B cell (primary cell): ENCODE measurements at regions of chr17 and their contacts with region 1.

Region 1: GRCh38 chr17:50169121-50169764 is 3.4 kb downstream of the SGCA start:
- DNase-seq: peak; percentile 91
- ATAC-seq: peak; percentile 84
- H3K4me3 ChIP-seq: peak overlapping the region in 4 of 5 experiments; percentile 12 to 44 (median 29)
- H3K4me3 Mint-ChIP-seq: peak overlapping the region; percentile 64
- H3K27ac ChIP-seq: no peak overlapping the region
- H3K27ac Mint-ChIP-seq: peak overlapping the region; percentile 74
- H3K4me1 ChIP-seq: peaks cover 16 to 27% of the 10 kb centered on the region in 2 donors
- H3K4me1 Mint-ChIP-seq: peaks cover 13% of the 10 kb centered on the region
- H3K27me3 ChIP-seq: no peaks in the 10 kb centered on the region
- H3K27me3 Mint-ChIP-seq: no peaks in the 10 kb centered on the region
- CTCF ChIP-seq: peak; percentile 66

Region 2: DNA sequence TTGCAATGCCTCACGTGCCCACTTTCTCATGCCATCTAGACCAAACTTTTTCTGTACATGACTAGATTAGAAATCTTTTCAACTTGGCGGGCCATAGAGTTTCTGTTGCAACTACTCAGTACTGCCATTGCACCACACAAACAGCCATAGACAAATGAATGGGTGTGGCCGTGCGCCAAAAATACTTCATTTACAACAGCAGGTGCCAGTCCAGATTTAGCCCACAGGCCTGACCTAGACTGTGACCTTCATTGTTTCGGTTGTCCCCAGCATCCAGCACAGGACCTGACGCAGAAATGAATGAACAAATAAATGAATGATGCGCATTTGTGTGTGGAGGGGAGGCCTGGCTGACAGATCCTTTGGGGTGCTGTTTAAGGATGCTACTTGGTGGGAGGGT is 88.4 kb before region 1 on chr17:
- CTCF ChIA-PET with region 1: no interaction called
- POLR2A ChIA-PET with region 1: no interaction called
- intact Hi-C with region 1: no loop called
- DNase-seq: no peak
- ATAC-seq: peak; percentile 45
- H3K4me3 ChIP-seq: no peak overlapping the region
- H3K4me3 Mint-ChIP-seq: peak overlapping the region; percentile 45
- H3K27ac ChIP-seq: peak overlapping the region in 1 of 2 donors; percentile 44
- H3K27ac Mint-ChIP-seq: peak overlapping the region; percentile 80
- H3K4me1 ChIP-seq: peaks cover 7 to 22% of the 10 kb centered on the region in 2 donors
- H3K4me1 Mint-ChIP-seq: peaks cover 21% of the 10 kb centered on the region
- H3K27me3 ChIP-seq: no peaks in the 10 kb centered on the region
- H3K27me3 Mint-ChIP-seq: no peaks in the 10 kb centered on the region
- CTCF ChIP-seq: no peak

Region 3: DNA sequence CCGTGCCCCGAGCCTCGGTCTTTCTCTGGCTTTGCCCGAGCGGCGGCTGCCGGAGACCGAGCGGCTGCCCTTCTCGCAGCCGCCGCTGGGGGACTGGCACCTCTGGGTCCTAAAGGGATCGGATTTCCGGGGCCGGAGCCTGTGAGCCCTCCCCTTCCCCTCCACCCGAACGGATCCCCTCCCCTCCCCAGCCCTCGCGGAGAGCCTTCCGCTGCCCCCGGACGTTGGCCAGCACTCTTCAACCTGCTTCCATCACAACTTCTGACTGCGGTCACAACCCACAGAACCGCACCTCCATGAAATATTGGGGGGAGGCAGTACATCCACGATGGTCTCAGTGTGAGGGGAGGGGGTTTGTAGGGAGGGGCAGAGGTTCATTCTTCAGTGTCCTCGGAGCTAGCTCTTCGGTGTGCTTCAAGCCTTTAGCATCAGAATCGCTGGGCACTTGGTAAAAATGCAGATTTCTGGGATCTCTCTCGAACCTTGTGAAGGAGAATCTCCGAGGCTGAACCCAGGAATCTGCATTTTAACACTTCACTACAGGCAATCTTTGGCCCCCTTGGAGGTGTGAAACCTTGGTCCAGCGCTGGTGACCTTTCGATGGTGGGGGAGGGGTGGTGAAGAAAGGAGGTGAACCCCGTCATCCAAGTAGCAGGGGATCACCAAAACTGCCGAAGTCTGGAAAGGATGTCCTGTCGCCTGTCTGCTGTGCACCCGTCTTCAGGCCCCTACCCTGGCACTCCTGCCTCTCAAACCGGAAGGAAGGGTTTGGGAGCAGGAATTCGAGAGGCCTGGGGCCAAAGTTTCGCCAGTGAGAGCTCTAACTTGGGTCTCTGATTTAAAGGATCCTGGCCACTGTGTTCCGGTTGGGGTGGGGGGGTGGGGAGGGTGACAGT is 18.0 kb before region 1 on chr17:
- CTCF ChIA-PET with region 1: interaction called, 18 read pairs
- POLR2A ChIA-PET with region 1: interaction called, 14 read pairs
- intact Hi-C with region 1: no loop called
- DNase-seq: peak; percentile 90
- ATAC-seq: peak; percentile 48
- H3K4me3 ChIP-seq: peak overlapping the region; percentile 70 to 97 (median 85)
- H3K4me3 Mint-ChIP-seq: peak overlapping the region; percentile 95
- H3K27ac ChIP-seq: peak overlapping the region; percentile 48 to 75
- H3K27ac Mint-ChIP-seq: peak overlapping the region; percentile 94
- H3K4me1 ChIP-seq: peaks cover 17 to 46% of the 10 kb centered on the region in 2 donors
- H3K4me1 Mint-ChIP-seq: peaks cover 37% of the 10 kb centered on the region
- H3K27me3 ChIP-seq: no peaks in the 10 kb centered on the region
- H3K27me3 Mint-ChIP-seq: no peaks in the 10 kb centered on the region
- CTCF ChIP-seq: peak; percentile 60

Region 4: DNA sequence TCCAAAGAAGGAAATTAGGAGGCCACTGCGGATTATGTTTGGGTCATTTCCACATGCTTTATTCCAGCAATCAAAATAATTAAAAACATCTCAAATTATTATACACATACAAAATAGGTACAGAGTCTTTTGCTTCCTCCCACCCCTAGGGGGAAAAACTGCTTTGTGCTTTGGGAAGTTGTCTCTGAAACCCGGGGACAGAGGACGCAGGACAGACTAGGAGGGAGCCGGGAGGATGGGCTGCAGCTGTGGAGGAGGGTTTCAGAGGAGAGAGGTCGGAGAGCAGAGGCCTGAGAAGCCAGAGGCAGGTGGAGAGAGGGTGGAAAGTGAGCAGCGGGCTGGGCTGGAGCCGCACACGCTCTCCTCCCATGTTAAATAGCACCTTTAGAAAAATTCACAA is 14.8 kb after region 1 on chr17:
- CTCF ChIA-PET with region 1: interaction called, 27 read pairs
- POLR2A ChIA-PET with region 1: no interaction called
- intact Hi-C with region 1: no loop called
- DNase-seq: no peak
- ATAC-seq: no peak
- H3K4me3 ChIP-seq: peak overlapping the region in 2 of 5 experiments; percentile 0 to 16
- H3K4me3 Mint-ChIP-seq: peak overlapping the region; percentile 56
- H3K27ac ChIP-seq: no peak overlapping the region
- H3K27ac Mint-ChIP-seq: peak overlapping the region; percentile 53
- H3K4me1 ChIP-seq: peaks cover 27 to 31% of the 10 kb centered on the region in 2 donors
- H3K4me1 Mint-ChIP-seq: peaks cover 40% of the 10 kb centered on the region
- H3K27me3 ChIP-seq: no peaks in the 10 kb centered on the region
- H3K27me3 Mint-ChIP-seq: no peaks in the 10 kb centered on the region
- CTCF ChIP-seq: peak; percentile 33

Region 5: DNA sequence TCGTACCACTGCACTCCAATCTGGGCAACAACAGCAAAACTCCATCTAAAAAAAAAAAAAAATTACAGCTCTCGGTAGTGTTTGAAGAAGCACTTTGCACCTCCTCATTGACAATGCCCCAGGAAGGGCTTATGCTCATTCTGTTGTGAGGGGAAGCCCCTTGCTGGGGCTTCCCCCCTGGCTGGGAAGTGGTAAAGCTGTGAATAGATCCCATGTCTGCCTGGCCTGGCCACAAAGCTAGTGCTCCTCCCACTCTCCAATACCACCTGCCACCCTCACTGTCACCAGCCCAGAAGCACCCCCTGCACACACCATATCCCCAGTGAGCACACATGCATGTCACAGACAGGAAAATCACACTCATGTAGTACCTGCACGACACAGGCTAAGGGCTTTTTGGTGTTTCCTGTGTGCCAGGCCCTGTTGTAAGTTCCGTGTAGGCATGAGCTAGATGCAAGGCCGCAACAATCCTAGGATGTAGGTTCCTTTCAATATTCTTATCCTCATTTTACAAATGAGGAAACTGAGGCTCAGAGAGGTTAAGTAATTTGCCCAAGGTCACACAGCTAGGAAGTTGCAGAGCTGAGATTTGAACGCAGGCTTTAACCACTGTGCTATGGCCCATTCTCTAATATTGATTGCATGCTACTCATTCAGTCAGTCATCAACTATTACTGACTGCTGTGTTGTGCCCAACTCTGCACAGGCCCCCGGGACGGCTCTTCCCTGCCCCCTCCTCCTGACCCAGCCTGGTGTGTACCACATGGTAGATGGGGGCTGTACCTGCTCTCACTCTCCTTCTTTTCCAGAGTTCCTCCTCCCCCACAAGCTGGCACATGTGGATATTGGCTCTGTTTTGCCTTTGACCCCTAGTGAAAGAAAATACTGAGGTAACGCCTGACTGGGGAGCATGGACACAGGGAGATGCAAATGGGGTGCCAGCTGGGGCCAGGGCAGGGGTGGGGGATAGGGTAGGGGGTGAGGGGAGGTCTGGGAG is 44.1 kb after region 1 on chr17:
- CTCF ChIA-PET with region 1: interaction called, 11 read pairs
- POLR2A ChIA-PET with region 1: no interaction called
- intact Hi-C with region 1: no loop called
- DNase-seq: peak; percentile 64
- ATAC-seq: peak; percentile 84
- H3K4me3 ChIP-seq: no peak overlapping the region
- H3K4me3 Mint-ChIP-seq: peak overlapping the region; percentile 8
- H3K27ac ChIP-seq: no peak overlapping the region
- H3K27ac Mint-ChIP-seq: no peak overlapping the region
- H3K4me1 ChIP-seq: peaks cover 8% of the 10 kb centered on the region in 2 donors
- H3K4me1 Mint-ChIP-seq: peaks cover 11% of the 10 kb centered on the region
- H3K27me3 ChIP-seq: peaks cover 0 to 19% (median 7%) of the 10 kb centered on the region in 4 experiments
- H3K27me3 Mint-ChIP-seq: peaks cover 23% of the 10 kb centered on the region
- CTCF ChIP-seq: no peak